Panc1 (cell line): ENCODE measurements at regions of chr9 and their contacts with region 1.

Region 1: DNA sequence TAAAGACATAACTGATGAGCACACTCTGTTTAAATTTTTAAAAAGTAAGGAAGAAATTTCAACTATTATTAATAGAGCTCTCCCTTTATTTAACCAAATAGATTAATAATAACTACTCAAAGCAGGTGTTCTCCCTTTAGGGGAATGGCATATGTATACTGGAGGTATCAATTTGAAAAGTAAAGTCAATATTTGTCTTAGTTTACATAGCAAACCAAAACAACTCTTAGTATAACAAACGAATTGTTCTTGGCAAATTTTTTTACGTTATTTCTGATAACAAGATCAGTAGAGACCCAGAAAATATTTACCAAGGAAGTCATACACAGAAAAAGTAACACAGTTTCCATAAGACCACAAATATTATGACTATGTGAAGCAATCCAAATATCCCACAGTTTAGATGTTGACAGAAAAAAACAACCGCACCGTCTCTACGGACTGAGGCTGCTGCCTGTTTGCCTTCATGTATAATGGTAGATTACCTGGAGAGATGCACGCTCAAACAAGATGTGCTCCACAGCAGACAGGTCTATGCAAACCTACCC is 46.6 kb upstream of the DAPK1 start:
- DNase-seq: no peak
- ATAC-seq: no peak
- H3K4me3 ChIP-seq: no peak overlapping the region
- H3K27ac ChIP-seq: no peak overlapping the region
- H3K4me1 ChIP-seq: no peaks in the 10 kb centered on the region
- H3K27me3 ChIP-seq: no peaks in the 10 kb centered on the region
- CTCF ChIP-seq: no peak

Region 2: GRCh38 chr9:87395804-87396479 is 55.1 kb before region 1 on chr9:
- CTCF ChIA-PET with region 1: no interaction called
- POLR2A ChIA-PET with region 1: no interaction called
- in situ Hi-C with region 1: no loop called
- intact Hi-C with region 1: loop called (anchors 10 kb)
- DNase-seq: no peak
- ATAC-seq: no peak
- H3K4me3 ChIP-seq: no peak overlapping the region
- H3K27ac ChIP-seq: no peak overlapping the region
- H3K4me1 ChIP-seq: no peaks in the 10 kb centered on the region
- H3K27me3 ChIP-seq: no peaks in the 10 kb centered on the region
- CTCF ChIP-seq: no peak